Vagina (tissue), 2 donors: ENCODE measurements at regions of chr14 and their contacts with region 1.

Region 1: DNA sequence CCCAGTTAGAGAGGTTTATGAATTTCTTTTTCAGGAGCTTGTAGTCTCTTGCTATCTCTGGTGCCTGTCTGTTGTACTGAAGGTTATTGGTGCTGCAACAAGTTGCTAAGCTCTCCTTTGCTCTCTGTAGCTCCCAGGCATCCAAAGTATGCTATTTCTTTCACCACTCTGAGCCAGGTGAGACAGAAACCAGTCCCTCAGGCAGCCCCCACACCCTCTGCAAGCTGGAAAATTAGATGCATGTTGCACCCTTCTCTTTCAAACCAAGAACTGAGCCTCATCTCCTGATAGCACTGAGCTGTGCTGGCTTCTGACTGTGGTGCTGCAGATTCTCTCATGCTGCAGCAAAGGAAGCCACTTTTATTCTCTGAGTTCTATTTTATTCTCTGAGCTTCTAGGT is 9.6 kb upstream of the TRIM9 start:
- DNase-seq: no peak
- H3K4me3 ChIP-seq: no peak overlapping the region
- H3K27ac ChIP-seq: no peak overlapping the region
- H3K4me1 ChIP-seq: no peaks in the 10 kb centered on the region
- H3K27me3 ChIP-seq: no peaks in the 10 kb centered on the region
- CTCF ChIP-seq: no peak
- POLR2A ChIP-seq: no peak

Region 2: GRCh38 chr14:50704454-50705010 is 399.9 kb before region 1 on chr14:
- intact Hi-C with region 1: no loop called
- DNase-seq: no peak
- H3K4me3 ChIP-seq: no peak overlapping the region
- H3K27ac ChIP-seq: no peak overlapping the region
- H3K4me1 ChIP-seq: no peaks in the 10 kb centered on the region
- H3K27me3 ChIP-seq: no peaks in the 10 kb centered on the region
- CTCF ChIP-seq: no peak
- POLR2A ChIP-seq: no peak

Region 3: GRCh38 chr14:51023964-51024363 is 80.5 kb before region 1 on chr14:
- intact Hi-C with region 1: loop called (anchors 2 kb)
- DNase-seq: no peak
- H3K4me3 ChIP-seq: no peak overlapping the region
- H3K27ac ChIP-seq: peak overlapping the region; percentile 24
- H3K4me1 ChIP-seq: no peaks in the 10 kb centered on the region
- H3K27me3 ChIP-seq: no peaks in the 10 kb centered on the region
- CTCF ChIP-seq: no peak
- POLR2A ChIP-seq: no peak